ENCODE measurements at regions of chr17 and their contacts with region 1.

Region 1: GRCh38 chr17:46212634-46213435 is 19.6 kb upstream of the KANSL1 start:
- DNase-seq: peak; percentile 92
- H3K4me3 ChIP-seq: no peak overlapping the region
- H3K27ac ChIP-seq: peak overlapping the region; percentile 13 to 55 (median 32)
- H3K4me1 ChIP-seq: peaks cover 7 to 47% (median 34%) of the 10 kb centered on the region in 4 donors
- H3K27me3 ChIP-seq: no peaks in the 10 kb centered on the region
- CTCF ChIP-seq: peak; percentile 77 to 89 (median 79)
- EP300 ChIP-seq: no peak
- POLR2A ChIP-seq: no peak

Region 2: DNA sequence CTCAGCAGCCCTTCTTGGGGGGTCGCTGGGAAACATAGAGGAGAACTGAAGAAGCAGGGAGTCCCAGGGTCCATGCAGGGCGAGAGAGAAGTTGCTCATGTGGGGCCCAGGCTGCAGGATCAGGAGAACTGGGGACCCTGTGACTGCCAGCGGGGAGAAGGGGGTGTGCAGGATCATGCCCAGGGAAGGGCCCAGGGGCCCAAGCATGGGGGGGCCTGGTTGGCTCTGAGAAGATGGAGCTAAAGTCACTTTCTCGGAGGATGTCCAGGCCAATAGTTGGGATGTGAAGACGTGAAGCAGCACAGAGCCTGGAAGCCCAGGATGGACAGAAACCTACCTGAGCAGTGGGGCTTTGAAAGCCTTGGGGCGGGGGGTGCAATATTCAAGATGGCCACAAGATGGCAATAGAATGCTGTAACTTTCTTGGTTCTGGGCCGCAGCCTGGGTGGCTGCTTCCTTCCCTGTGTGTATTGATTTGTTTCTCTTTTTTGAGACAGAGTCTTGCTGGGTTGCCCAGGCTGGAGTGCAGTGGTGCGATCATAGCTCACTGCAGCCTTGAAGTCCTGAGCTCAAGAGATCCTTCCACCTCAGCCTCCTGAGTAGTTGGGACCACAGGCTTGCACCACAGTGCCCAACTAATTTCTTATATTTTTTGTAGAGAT is 210.4 kb before region 1 on chr17:
- intact Hi-C with region 1: loop called (anchors 1 kb)
- DNase-seq: no peak
- H3K4me3 ChIP-seq: no peak overlapping the region
- H3K27ac ChIP-seq: no peak overlapping the region
- H3K4me1 ChIP-seq: peaks cover 12 to 21% (median 20%) of the 10 kb centered on the region in 4 donors
- H3K27me3 ChIP-seq: no peaks in the 10 kb centered on the region
- CTCF ChIP-seq: peak in 2 of 3 experiments; percentile 98
- EP300 ChIP-seq: no peak
- POLR2A ChIP-seq: no peak

Region 3: DNA sequence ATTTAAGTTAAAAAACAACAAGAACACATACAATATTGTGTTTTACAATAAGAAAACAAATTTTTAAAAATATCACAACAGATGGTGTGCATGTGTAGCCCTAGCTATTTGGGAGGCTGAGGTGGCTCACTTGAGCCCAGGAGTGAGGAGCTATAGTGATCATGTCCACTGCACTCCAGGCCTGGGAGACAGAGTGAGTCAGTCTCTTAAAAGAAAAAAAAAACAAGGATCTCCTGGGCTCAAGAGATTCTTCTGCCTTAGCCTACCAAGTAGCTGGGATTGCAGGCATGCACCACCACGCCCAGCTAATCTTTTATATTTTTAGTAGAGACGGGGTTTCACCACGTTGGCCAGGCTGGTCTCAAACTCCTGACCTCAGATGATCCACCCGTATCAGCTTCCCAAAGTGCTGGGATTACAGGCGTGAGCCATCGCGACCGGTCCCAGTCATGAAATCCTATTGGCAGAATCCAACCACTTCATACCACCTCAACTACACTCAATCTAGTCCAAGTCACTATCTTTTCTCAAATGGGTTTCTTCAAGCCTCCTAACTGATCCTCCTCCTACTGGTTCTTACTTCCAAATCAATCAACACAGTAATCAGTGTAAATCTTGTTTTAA is 158.8 kb before region 1 on chr17:
- intact Hi-C with region 1: no loop called
- DNase-seq: no peak
- H3K4me3 ChIP-seq: no peak overlapping the region
- H3K27ac ChIP-seq: no peak overlapping the region
- H3K4me1 ChIP-seq: peaks cover 0 to 37% (median 24%) of the 10 kb centered on the region in 4 donors
- H3K27me3 ChIP-seq: no peaks in the 10 kb centered on the region
- CTCF ChIP-seq: no peak
- EP300 ChIP-seq: no peak
- POLR2A ChIP-seq: no peak

Region 4: DNA sequence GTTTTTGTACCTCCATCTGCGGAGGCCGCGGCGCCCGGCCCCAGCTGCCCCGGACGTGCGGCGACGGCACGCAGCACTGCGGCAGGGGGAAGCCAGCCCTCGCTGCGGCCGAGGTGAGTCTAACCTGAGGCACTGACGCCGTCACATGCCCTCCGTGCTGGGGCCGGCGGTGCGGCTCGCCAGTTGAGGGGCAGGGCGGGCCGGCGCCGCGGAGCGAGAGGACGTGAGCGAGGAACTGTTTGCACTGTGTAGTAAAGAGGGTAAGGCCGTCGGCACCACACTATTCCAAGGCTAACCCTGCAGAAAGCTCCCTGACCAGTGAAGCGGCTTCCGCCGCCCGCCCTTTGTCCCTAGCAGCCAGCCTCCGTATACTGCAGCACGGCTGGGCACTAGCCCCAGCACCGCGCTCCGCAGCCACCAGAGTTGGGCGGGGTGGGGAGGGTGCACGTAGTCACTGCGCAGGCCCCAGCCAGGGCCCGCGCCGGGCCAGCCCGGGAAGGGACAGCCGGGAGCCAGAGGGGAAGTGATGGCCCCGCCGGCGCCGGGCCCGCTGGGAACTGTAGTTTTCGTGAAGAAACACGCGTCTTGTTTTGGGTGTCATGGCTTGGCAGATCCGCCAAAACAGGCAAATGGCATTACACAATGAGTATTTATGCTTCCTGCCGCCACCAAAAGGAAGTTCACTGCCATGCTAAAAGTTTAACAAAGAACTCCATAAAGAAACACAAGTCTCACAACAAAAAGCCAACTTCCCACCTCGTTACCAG is 19.0 kb before region 1 on chr17:
- intact Hi-C with region 1: loop called (anchors 2 kb)
- DNase-seq: peak; percentile 98
- H3K4me3 ChIP-seq: peak overlapping the region; percentile 96 to 100 (median 99)
- H3K27ac ChIP-seq: peak overlapping the region; percentile 100
- H3K4me1 ChIP-seq: peaks cover 34 to 63% (median 56%) of the 10 kb centered on the region in 4 donors
- H3K27me3 ChIP-seq: no peaks in the 10 kb centered on the region
- CTCF ChIP-seq: peak; percentile 29 to 43 (median 42)
- EP300 ChIP-seq: no peak
- POLR2A ChIP-seq: peak; percentile 49